ENCODE measurements at regions of chr2 and their contacts with region 1.

Region 1: GRCh38 chr2:104976603-104977120 is 61.2 kb upstream of the MRPS9 start:
- DNase-seq: peak; percentile 94
- H3K4me3 ChIP-seq: peak overlapping the region; percentile 59
- H3K27ac ChIP-seq: peak overlapping the region; percentile 96
- H3K4me1 ChIP-seq: peaks cover 33% of the 10 kb centered on the region
- CTCF ChIP-seq: peak; percentile 93

Region 2: DNA sequence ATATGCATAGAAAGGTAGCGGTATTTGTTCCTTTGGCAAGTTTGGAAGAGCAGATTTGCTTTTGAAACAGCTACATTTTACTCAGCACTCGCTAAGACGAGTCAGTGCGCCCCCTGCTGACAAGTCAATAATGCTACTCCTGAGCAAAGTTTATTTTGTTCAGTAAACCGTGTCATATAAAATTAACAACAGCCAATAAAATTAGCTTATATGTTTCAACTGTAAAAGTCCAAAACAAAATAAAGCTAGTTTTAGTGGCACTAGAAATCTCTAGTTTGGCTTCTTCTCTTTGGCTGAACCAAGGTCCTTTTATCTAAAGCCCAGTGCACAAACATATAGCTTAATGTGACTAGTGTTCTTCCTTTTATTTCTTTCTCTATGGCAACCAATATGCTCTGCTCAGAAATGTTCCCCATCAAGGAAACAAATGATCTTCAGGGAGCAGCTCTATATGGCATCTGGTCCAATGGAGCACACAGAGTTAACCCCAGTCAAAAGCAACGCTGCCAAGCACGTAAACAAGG is 127.0 kb before region 1 on chr2:
- CTCF ChIA-PET with region 1: no interaction called
- POLR2A ChIA-PET with region 1: interaction called, 4 read pairs
- intact Hi-C with region 1: loop called (anchors 2 kb)
- DNase-seq: peak; percentile 74
- H3K4me3 ChIP-seq: no peak overlapping the region
- H3K27ac ChIP-seq: no peak overlapping the region
- H3K4me1 ChIP-seq: peaks cover 15% of the 10 kb centered on the region
- CTCF ChIP-seq: peak; percentile 91

Region 3: DNA sequence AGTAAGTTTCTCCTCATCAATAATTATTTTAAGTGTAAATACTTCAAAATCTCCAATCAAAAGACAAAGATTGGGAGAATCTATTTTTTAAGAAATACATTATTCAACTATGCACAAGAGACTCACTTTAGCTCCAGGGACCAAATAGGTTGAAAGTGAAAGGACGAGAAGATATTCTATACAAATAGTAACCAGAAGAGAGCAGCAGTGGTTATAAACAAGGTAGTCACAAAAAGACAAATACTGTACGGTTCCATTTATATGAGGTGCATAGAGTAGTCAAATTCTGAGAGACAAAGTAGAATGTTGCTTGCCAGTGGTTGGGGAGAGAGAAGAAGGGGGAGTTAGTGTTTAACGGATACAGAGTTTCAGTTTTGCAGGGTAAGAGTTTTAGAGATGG is 53.0 kb before region 1 on chr2:
- CTCF ChIA-PET with region 1: interaction called, 8 read pairs
- POLR2A ChIA-PET with region 1: interaction called, 7 read pairs
- intact Hi-C with region 1: loop called (anchors 2 kb)
- DNase-seq: peak; percentile 10
- H3K4me3 ChIP-seq: no peak overlapping the region
- H3K27ac ChIP-seq: no peak overlapping the region
- H3K4me1 ChIP-seq: no peaks in the 10 kb centered on the region
- CTCF ChIP-seq: peak; percentile 60

Region 4: DNA sequence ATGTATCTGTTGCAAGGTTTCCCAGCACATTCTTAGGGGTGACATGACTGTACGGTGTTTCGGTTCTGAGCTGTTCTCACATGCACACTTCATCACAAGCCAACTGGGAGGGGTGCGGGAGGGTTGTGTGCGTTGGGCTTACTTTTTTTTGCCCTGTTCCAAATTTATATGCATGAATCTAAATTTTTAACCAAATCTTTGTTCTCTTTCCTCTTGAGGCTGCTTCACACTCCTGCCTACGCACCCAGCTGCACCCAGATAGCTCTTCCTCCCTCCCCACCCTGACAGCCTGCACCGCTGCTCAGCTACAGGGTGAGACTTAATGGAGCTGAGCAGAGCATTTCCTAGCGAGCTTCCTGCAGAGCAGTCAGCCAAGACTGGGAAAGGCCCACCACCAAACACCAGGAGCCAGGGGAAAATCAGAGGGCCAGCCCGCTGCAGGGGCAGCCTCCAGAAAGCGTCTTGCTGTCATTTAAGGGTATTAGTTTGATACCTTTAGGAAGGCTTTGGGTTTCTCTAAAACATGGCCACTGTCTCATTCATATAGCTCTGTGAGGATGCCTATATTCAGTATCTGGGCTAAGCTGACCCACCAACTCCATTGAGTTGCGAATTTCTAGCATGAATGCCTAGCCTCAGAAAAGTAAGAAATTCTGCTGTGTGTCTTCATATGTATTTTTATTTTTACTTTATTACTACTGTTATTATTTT is 38.3 kb before region 1 on chr2:
- CTCF ChIA-PET with region 1: interaction called, 5 read pairs
- POLR2A ChIA-PET with region 1: interaction called, 6 read pairs
- intact Hi-C with region 1: loop called (anchors 2 kb)
- DNase-seq: peak; percentile 44
- H3K4me3 ChIP-seq: no peak overlapping the region
- H3K27ac ChIP-seq: no peak overlapping the region
- H3K4me1 ChIP-seq: peaks cover 25% of the 10 kb centered on the region
- CTCF ChIP-seq: no peak

Region 5: DNA sequence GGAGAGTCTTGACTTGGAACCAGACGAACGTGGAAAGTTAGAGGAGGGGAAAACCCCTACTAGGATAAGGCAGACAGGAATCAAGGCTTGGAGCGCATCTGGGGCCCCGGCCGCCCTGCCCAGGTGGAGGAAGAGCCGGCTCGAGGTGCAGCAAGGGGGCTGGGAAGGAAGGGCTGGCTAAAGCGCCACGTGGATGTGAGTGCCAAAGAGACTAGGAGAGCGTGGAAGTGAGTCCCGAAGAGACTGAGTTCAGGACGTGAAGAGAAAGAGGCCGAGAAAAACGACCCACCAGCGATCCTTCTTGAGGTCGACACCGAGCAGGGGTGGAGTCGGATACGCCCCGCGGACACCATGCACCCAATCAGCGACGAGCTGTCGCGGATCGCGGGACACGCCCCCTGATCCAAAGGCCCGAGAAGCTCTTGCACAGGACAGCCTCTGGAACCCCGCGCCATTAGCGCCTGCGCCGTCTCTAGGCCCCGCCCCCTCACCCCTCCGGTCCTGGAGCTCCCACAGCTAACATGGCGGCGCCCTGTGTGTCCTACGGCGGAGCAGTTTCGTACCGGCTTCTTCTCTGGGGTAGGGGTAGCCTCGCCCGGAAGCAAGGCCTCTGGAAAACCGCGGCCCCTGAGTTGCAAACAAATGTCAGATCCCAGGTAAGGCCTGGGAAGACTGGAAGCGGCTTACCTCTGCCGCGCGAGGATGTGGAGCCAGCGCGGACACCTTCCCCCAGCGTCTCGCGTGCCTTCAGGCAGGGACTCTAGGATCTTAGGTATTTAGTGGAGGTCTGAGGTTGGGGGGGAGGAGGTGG is 61.1 kb after region 1 on chr2 and contains the start of gene MRPS9:
- CTCF ChIA-PET with region 1: interaction called, 6 read pairs
- POLR2A ChIA-PET with region 1: interaction called, 12 read pairs
- intact Hi-C with region 1: loop called (anchors 1 kb)
- DNase-seq: peak; percentile 97
- H3K4me3 ChIP-seq: peak within 1 kb of the TSS; percentile 95
- H3K27ac ChIP-seq: peak within 1 kb of the TSS; percentile 39
- H3K4me1 ChIP-seq: peaks cover 22% of the 10 kb centered on the region
- CTCF ChIP-seq: no peak
- total RNA-seq, gene MRPS9: 25.9 and 32.1 TPM in 2 replicates

Measured in OCI-LY7 (cell line).